HAP-1 (cell line): ENCODE measurements at regions of chr6 and their contacts with region 1.

Region 1: GRCh38 chr6:125956506-125957390 is at the start of gene HINT3:
- DNase-seq: peak; percentile 92 to 99
- H3K4me3 ChIP-seq: peak within 1 kb of the TSS; percentile 79
- H3K4me1 ChIP-seq: peaks cover 12% of the 10 kb centered on the region
- H3K27me3 ChIP-seq: no peaks in the 10 kb centered on the region

Region 2: DNA sequence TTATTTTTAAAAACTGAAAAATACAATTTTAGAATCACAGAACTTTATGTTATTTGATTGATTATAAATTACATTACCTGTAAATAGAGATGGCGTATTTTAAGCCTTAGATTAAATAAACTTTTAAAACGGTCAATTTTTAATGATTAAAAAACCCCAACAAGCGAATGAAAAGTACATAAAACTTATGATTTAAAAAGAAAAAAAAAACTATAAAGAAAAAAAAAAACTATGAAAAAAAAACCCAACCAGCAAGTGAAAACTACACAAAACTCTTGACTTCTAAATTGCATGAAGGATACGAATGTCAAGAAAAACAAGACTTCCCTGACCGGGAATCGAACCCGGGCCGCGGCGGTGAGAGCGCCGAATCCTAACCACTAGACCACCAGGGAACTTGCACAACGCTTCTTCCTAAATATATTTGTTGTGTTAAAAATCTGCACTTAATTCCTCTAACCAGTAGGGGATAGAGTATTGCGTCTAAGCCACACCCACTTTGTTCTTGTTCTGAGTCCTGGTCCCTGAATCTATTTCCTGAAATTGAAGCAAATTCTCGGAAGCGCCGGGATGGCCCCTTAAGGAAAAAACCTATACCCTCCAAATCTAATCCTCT is 176.7 kb before region 1 on chr6:
- in situ Hi-C with region 1: loop called (anchors 10 kb)
- DNase-seq: peak; percentile 84 to 94
- H3K4me3 ChIP-seq: peak overlapping the region; percentile 44
- H3K4me1 ChIP-seq: peaks cover 27% of the 10 kb centered on the region
- H3K27me3 ChIP-seq: no peaks in the 10 kb centered on the region

Region 3: GRCh38 chr6:126293891-126294524 is 337.3 kb after region 1 on chr6:
- in situ Hi-C with region 1: no loop called
- DNase-seq: no peak
- H3K4me3 ChIP-seq: no peak overlapping the region
- H3K4me1 ChIP-seq: no peaks in the 10 kb centered on the region
- H3K27me3 ChIP-seq: peaks cover 6% of the 10 kb centered on the region

Region 4: DNA sequence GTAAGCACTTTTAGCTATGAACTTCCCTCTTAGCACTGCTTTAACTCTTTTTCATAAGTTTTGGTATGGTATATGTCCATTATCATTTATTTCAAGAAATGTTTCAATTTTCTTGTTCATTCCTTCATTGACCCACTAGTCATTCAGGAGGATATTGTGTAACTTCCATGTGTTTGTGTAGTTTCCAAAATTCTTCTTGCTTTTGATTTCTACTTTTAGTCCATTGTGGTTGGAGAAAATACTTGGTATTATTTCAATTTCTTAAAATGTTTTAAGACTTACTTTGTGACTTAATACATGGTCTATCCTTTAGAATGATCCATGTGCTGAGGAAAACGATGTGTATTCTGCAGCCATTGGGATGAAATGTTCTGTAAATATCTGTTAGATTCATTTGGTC is 559.7 kb after region 1 on chr6:
- in situ Hi-C with region 1: no loop called
- DNase-seq: no peak
- H3K4me3 ChIP-seq: no peak overlapping the region
- H3K4me1 ChIP-seq: no peaks in the 10 kb centered on the region
- H3K27me3 ChIP-seq: no peaks in the 10 kb centered on the region